PC-3 (cell line): ENCODE measurements at regions of chr5 and their contacts with region 1.

Region 1: DNA sequence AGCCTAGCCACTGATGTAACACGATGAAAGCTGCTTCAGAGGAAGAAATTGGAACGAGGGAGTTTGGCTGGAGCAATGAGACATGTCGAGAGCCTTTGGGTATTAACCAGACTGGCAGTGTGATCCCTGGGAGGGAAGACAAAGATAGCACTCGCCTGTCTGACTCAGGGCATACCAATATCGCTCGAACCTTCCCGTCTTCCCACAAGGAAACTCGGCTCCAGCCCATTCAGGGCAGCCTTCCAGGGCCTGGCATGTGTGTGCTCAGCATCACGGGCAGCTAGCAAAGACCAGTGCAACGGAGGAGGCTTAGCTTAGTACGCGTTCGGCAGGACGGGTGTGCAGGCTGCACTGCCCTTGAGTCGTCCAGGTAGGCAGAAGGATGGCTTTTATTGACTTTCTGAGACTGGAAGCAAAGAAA is 356.9 kb upstream of the WWC1 start:
- DNase-seq: no peak
- ATAC-seq: no peak
- H3K4me3 ChIP-seq: no peak overlapping the region
- H3K27ac ChIP-seq: no peak overlapping the region
- H3K4me1 ChIP-seq: no peaks in the 10 kb centered on the region
- H3K27me3 ChIP-seq: peaks cover 87% of the 10 kb centered on the region
- CTCF ChIP-seq: no peak

Region 2: GRCh38 chr5:167587772-167588437 is 346.7 kb before region 1 on chr5:
- CTCF ChIA-PET with region 1: no interaction called
- POLR2A ChIA-PET with region 1: no interaction called
- intact Hi-C with region 1: loop called (anchors 10 kb)
- DNase-seq: peak; percentile 50
- ATAC-seq: peak; percentile 79
- H3K4me3 ChIP-seq: no peak overlapping the region
- H3K27ac ChIP-seq: no peak overlapping the region
- H3K4me1 ChIP-seq: no peaks in the 10 kb centered on the region
- H3K27me3 ChIP-seq: peaks cover 46% of the 10 kb centered on the region
- CTCF ChIP-seq: peak; percentile 45; the same call in 1 of the 2 replicates

Region 3: DNA sequence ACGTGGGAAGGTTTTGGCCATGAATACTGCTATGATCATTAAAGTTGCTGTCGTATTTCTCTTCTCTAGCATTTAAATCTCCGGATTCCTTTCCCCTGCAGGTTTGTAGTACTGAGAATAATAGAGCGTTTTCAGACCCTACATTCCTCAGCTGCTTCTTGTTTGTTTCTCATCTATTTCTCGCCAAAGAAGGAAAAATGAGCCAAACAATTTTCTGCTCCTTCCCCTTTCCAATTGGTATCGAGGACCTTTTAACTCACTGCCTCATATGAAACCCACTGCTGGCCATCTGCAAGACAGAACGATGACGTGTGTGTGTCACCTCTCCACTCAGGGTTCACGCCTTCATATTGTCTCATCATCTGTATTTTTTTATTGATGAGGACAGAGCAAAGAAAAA is 332.5 kb before region 1 on chr5:
- CTCF ChIA-PET with region 1: no interaction called
- POLR2A ChIA-PET with region 1: interaction called, 10 read pairs
- intact Hi-C with region 1: no loop called
- DNase-seq: no peak
- ATAC-seq: no peak
- H3K4me3 ChIP-seq: no peak overlapping the region
- H3K27ac ChIP-seq: no peak overlapping the region
- H3K4me1 ChIP-seq: no peaks in the 10 kb centered on the region
- H3K27me3 ChIP-seq: peaks cover 70% of the 10 kb centered on the region
- CTCF ChIP-seq: no peak

Region 4: GRCh38 chr5:167888395-167888794 is 46.2 kb before region 1 on chr5:
- CTCF ChIA-PET with region 1: no interaction called
- POLR2A ChIA-PET with region 1: interaction called, 11 read pairs
- intact Hi-C with region 1: no loop called
- DNase-seq: no peak
- ATAC-seq: no peak
- H3K4me3 ChIP-seq: no peak overlapping the region
- H3K27ac ChIP-seq: no peak overlapping the region
- H3K4me1 ChIP-seq: no peaks in the 10 kb centered on the region
- H3K27me3 ChIP-seq: peaks cover 85% of the 10 kb centered on the region
- CTCF ChIP-seq: peak; percentile 17; the same call in 1 of the 2 replicates